ENCODE measurements at regions of chr2 and their contacts with region 1.

Region 1: DNA sequence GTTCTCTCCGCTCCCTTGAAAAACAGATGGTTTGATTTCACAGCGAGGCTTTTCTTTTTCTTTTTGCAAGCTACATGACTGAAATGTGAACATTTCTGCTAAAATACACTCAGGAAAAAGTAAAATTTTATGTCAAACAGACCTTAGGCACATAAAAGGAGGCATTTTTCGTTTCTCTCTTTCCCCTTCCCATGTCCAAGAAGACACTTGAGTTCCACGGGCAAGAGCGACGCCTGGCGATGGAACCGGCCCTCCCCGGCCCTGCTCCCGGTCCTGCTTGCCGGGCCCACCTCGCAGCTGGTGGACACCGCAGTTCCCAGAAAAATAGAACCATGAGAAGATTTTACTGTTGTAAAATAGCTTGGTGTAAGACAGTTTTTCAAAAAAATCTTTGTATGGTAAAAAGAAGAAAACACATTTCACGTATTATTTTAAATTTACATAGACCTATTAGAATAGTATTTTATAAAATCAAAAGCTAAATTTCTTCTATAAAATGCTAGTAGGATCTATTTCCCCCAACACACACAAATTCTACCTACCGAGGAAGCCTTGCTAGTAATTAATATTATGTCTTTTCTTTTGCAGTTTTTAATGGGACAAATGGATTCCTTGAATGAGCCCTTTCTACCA is 2.3 kb upstream of the ALKAL2 start:
- DNase-seq: peak in 2 of 3 donors; percentile 83 to 84
- ATAC-seq: peak; percentile 76
- H3K4me3 ChIP-seq: no peak overlapping the region
- H3K4me1 ChIP-seq: peaks cover 20% of the 10 kb centered on the region
- CTCF ChIP-seq: peak; percentile 46

Region 2: DNA sequence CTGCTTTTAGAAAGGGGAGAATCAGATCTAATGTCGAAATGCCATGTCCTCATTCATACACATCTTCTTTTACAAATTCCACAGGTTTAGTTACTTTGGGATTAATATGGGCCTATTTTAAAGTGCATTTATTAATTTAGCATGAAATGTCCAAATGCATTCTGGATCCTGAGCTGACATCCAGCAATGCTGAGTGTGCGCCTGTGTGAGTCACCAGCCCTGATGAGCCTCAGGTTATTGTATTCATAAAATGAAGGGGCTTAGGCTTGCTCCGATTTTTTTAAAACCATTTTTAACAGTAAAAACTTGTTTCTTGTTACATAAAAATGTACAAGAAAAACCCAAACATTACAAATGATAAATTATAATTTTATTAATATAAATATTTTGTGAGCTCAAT is 120.5 kb before region 1 on chr2:
- intact Hi-C with region 1: loop called in 1 of 2 experiments (anchors 5 kb)
- DNase-seq: no peak
- ATAC-seq: no peak
- H3K4me3 ChIP-seq: no peak overlapping the region
- H3K4me1 ChIP-seq: no peaks in the 10 kb centered on the region
- CTCF ChIP-seq: no peak

Region 3: DNA sequence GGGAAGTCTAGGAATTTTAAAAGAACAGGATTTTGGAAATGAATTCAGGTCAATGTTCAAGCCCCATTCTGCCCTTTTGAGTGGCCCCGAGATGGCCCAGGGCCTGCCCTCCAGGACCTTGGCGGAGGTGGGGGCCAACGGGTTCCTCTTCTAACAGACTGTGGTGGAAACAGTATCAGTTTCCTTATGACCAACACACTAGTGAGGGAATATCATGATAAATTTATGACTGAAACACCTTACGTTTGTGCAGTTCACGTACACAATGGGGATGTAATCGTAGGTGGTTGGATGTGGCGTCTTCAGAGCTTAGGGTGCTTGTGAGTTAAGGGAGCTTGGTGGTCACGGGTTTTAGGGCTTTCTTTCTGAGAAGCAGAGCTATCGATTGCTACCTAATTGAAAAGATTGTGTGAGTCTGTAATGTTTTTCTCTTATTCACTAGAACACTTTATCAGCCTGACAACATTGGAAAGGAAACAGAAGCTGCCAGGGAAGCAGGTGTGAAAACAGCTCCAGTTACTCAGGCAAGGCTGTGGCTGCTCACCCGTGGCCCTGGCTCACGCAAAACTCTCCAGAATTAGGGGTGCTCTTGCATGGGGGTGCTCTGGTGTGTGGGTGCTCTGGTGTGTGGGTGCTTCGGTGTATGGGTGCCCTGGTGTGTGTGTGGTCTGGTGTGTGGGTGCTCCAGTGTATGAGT is 825.8 kb after region 1 on chr2:
- intact Hi-C with region 1: no loop called
- DNase-seq: no peak
- ATAC-seq: no peak
- H3K4me3 ChIP-seq: no peak overlapping the region
- H3K4me1 ChIP-seq: no peaks in the 10 kb centered on the region
- CTCF ChIP-seq: no peak

Measured in mucosa of descending colon (tissue), 3 donors.